ENCODE measurements at regions of chr15 and their contacts with region 1.

Region 1: DNA sequence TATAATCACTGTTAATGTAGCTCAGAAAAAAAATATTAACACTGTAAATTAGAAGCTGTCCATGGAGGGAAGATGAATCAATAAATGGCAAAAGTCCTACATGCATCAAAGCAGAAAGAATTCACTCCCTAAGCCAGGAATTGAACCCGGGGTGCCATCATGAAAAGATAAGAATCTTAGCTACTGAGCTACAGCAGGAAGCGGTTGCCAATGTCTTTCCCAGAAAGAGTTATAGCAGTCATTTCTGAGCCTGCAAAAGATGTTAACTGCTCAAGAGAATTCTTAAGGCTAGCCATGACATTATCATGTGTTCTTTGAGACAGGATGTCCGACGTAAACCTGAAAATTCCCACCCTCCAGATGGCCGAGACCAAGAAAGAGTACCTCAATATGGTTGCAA is 47.4 kb upstream of the MKRN3 start:
- DNase-seq: no peak
- ATAC-seq: no peak
- H3K4me3 ChIP-seq: no peak overlapping the region
- H3K27ac ChIP-seq: no peak overlapping the region
- H3K4me1 ChIP-seq: no peaks in the 10 kb centered on the region
- H3K27me3 ChIP-seq: no peaks in the 10 kb centered on the region
- CTCF ChIP-seq: no peak

Region 2: DNA sequence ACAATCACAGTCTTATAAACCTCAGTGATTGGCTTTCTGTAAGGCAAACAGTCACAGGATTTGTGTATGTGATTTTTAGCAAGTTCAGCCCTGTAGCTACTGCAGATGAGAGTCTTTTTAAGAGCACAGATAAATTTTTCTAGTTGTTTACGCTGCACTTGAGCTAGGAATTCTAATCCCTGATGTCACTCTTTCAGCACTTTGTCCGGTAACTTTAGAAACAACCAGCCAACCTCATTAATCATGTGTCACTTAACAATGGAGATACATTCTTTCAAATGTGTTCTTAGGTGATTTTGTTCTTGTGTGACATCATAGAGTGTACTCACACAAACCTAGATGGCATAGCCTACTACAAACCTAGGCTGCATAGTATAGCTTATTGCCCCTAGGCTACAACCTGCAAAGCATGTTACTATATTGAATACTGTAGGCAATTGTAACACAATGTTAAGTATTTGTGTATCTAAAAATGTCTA is 34.2 kb before region 1 on chr15:
- intact Hi-C with region 1: loop called in 1 of 2 experiments (anchors 2 kb)
- DNase-seq: no peak
- ATAC-seq: peak in 1 of 4 donors; percentile 46
- H3K4me3 ChIP-seq: no peak overlapping the region
- H3K27ac ChIP-seq: no peak overlapping the region
- H3K4me1 ChIP-seq: no peaks in the 10 kb centered on the region
- H3K27me3 ChIP-seq: no peaks in the 10 kb centered on the region
- CTCF ChIP-seq: no peak

Region 3: GRCh38 chr15:23538648-23539047 is 20.5 kb after region 1 on chr15:
- intact Hi-C with region 1: no loop called
- DNase-seq: no peak
- ATAC-seq: no peak
- H3K4me3 ChIP-seq: no peak overlapping the region
- H3K27ac ChIP-seq: no peak overlapping the region
- H3K4me1 ChIP-seq: no peaks in the 10 kb centered on the region
- H3K27me3 ChIP-seq: no peaks in the 10 kb centered on the region
- CTCF ChIP-seq: no peak

Region 4: GRCh38 chr15:23606226-23606625 is 88.1 kb after region 1 on chr15:
- intact Hi-C with region 1: no loop called
- DNase-seq: no peak
- ATAC-seq: no peak
- H3K4me3 ChIP-seq: no peak overlapping the region
- H3K27ac ChIP-seq: no peak overlapping the region
- H3K4me1 ChIP-seq: no peaks in the 10 kb centered on the region
- H3K27me3 ChIP-seq: no peaks in the 10 kb centered on the region
- CTCF ChIP-seq: no peak

Measured in psoas muscle (tissue), 8 donors.